Activated CD4-positive, alpha-beta memory T cell treated with anti-CD3 and anti-CD28 coated beads, Interleukin-2, amount 10 ng/mL, durations not matched to agents 7 days and 5 days (primary cell): ENCODE measurements at regions of chr3 and their contacts with region 1.

Region 1: DNA sequence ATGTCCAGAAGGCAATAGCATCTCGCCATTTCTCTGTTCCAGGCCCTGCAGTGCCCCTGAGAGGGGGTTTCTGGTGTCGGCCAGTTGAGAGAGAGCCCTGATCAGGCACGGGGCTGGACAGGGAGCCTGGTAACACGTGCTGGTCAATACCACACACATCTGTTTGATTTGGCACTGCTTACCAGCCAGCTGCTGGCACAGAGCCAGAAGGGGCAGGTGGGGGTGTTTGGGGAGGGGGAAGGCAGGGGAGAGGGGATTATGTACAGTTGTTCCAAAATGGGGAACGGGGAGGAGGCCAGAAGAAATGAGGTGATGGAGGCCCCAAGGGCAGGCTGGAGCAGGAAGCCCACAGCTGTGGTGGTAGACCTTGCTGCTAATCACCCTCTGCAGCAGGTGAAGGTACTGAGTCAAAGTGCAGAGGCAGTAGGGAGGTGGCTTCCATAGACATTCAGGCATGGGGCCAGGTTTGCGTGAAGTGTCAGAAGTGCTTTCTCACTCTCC is 153.5 kb upstream of the LPP start:
- DNase-seq: peak; percentile 29
- H3K4me3 Mint-ChIP-seq: peak overlapping the region; percentile 72
- H3K27ac Mint-ChIP-seq: peak overlapping the region; percentile 99
- H3K4me1 Mint-ChIP-seq: peaks cover 74% of the 10 kb centered on the region
- H3K27me3 Mint-ChIP-seq: no peaks in the 10 kb centered on the region

Region 2: DNA sequence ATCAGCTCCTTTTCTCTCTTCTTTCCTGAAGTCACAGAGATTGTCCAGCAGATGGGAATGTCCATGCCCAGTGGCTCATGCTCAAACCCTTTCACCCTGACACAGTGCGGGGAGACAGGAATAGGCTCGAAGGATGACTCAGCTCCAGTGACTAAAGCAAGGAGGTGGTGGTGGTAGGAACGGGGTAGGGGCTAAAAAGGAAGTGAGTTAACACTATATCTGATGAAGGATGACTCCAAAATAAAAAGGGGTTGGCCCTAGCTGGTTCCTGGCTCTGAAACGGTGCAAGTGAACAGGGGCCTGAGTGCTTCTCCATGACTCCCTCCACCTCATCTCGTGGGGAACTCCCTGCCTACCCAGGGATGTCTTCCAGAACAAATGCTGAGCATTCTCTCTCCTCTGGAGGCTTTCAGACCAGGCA is 13.9 kb before region 1 on chr3:
- CTCF ChIA-PET with region 1: interaction called, 13 read pairs
- POLR2A ChIA-PET with region 1: interaction called, 11 read pairs
- DNase-seq: peak; percentile 60
- H3K4me3 Mint-ChIP-seq: peak overlapping the region; percentile 6
- H3K27ac Mint-ChIP-seq: peak overlapping the region; percentile 74
- H3K4me1 Mint-ChIP-seq: peaks cover 51% of the 10 kb centered on the region
- H3K27me3 Mint-ChIP-seq: no peaks in the 10 kb centered on the region